Activated CD4-positive, alpha-beta memory T cell treated with anti-CD3 and anti-CD28 coated beads for 36 hours (primary cell): ENCODE measurements at regions of chr2 and their contacts with region 1.

Region 1: GRCh38 chr2:47520825-47521665 is 118.1 kb downstream of the MSH2 start:
- DNase-seq: peak; percentile 86
- H3K4me3 Mint-ChIP-seq: peak overlapping the region; percentile 78
- H3K27ac Mint-ChIP-seq: peak overlapping the region; percentile 85
- H3K4me1 Mint-ChIP-seq: peaks cover 8% of the 10 kb centered on the region
- H3K27me3 Mint-ChIP-seq: no peaks in the 10 kb centered on the region

Region 2: DNA sequence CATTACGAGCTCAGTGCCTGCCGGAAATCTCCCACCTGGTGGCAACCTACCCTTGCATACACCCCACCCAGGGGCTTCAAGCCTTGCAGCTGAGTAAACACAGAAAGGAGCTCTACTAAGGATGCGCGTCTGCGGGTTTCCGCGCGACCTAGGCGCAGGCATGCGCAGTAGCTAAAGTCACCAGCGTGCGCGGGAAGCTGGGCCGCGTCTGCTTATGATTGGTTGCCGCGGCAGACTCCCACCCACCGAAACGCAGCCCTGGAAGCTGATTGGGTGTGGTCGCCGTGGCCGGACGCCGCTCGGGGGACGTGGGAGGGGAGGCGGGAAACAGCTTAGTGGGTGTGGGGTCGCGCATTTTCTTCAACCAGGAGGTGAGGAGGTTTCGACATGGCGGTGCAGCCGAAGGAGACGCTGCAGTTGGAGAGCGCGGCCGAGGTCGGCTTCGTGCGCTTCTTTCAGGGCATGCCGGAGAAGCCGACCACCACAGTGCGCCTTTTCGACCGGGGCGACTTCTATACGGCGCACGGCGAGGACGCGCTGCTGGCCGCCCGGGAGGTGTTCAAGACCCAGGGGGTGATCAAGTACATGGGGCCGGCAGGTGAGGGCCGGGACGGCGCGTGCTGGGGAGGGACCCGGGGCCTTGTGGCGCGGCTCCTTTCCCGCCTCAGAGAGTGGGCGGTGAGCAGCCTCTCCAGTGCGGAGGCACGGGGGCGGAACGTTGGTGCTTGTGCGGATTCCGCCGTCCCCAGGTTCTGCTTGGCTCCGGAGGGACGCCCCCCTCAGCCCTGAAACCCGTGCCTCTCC is 118.0 kb before region 1 on chr2 and contains the start of gene MSH2:
- CTCF ChIA-PET with region 1: interaction called, 4 read pairs
- POLR2A ChIA-PET with region 1: interaction called, 3 read pairs
- intact Hi-C with region 1: loop called (anchors 2 kb)
- DNase-seq: peak; percentile 96
- H3K4me3 Mint-ChIP-seq: peak within 1 kb of the TSS; percentile 96
- H3K27ac Mint-ChIP-seq: peak within 1 kb of the TSS; percentile 95
- H3K4me1 Mint-ChIP-seq: peaks cover 24% of the 10 kb centered on the region
- H3K27me3 Mint-ChIP-seq: no peaks in the 10 kb centered on the region
- total RNA-seq, gene MSH2: 57.0 to 59.1 TPM

Region 3: DNA sequence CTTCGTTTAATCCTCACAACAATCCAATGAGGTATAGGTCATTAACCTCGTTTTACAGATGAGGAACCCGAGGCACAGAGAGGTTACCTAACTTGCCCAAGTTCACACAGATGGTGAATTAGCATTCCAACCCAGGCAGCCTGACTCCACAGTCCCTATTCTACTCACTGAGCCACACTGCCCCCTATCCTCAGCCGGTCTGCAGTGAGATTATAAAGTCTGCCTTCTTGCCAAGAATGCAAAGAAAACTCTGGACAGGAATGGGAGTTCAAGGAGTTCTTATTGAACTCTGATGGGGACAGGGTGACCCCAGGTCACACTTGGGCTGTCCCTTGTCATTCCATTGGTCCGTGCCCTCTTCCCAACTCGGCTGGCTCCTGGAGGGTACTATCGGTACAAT is 143.8 kb after region 1 on chr2:
- CTCF ChIA-PET with region 1: no interaction called
- POLR2A ChIA-PET with region 1: no interaction called
- intact Hi-C with region 1: no loop called
- DNase-seq: no peak
- H3K4me3 Mint-ChIP-seq: no peak overlapping the region
- H3K27ac Mint-ChIP-seq: no peak overlapping the region
- H3K4me1 Mint-ChIP-seq: no peaks in the 10 kb centered on the region
- H3K27me3 Mint-ChIP-seq: peaks cover 7% of the 10 kb centered on the region

Region 4: GRCh38 chr2:47751875-47752357 is 230.9 kb after region 1 on chr2:
- CTCF ChIA-PET with region 1: no interaction called
- POLR2A ChIA-PET with region 1: no interaction called
- intact Hi-C with region 1: loop called (anchors 2 kb)
- DNase-seq: no peak
- H3K4me3 Mint-ChIP-seq: no peak overlapping the region
- H3K27ac Mint-ChIP-seq: peak overlapping the region; percentile 87
- H3K4me1 Mint-ChIP-seq: peaks cover 17% of the 10 kb centered on the region
- H3K27me3 Mint-ChIP-seq: no peaks in the 10 kb centered on the region